ENCODE measurements at regions of chr14 and their contacts with region 1.

Region 1: GRCh38 chr14:23588884-23589598 is 10.5 kb upstream of the JPH4 start:
- DNase-seq: peak; percentile 72
- H3K4me3 ChIP-seq: no peak overlapping the region
- H3K27ac ChIP-seq: no peak overlapping the region
- H3K4me1 ChIP-seq: no peaks in the 10 kb centered on the region
- H3K27me3 ChIP-seq: no peaks in the 10 kb centered on the region
- CTCF ChIP-seq: peak; percentile 68 to 88

Region 2: GRCh38 chr14:23578560-23579310 is 10.3 kb before region 1 on chr14 and contains the start of gene JPH4:
- CTCF ChIA-PET with region 1: interaction called, 10 read pairs
- dilution Hi-C with region 1: no loop called
- in situ Hi-C with region 1: no loop called
- intact Hi-C with region 1: no loop called
- DNase-seq: no peak
- H3K4me3 ChIP-seq: no peak within 1 kb of the TSS
- H3K27ac ChIP-seq: no peak within 1 kb of the TSS
- H3K4me1 ChIP-seq: peaks cover 3% of the 10 kb centered on the region
- H3K27me3 ChIP-seq: peaks cover 32% of the 10 kb centered on the region
- CTCF ChIP-seq: no peak
- total RNA-seq, gene JPH4: 0.16 TPM in 1 of 2 donors, not detected in the other

Region 3: DNA sequence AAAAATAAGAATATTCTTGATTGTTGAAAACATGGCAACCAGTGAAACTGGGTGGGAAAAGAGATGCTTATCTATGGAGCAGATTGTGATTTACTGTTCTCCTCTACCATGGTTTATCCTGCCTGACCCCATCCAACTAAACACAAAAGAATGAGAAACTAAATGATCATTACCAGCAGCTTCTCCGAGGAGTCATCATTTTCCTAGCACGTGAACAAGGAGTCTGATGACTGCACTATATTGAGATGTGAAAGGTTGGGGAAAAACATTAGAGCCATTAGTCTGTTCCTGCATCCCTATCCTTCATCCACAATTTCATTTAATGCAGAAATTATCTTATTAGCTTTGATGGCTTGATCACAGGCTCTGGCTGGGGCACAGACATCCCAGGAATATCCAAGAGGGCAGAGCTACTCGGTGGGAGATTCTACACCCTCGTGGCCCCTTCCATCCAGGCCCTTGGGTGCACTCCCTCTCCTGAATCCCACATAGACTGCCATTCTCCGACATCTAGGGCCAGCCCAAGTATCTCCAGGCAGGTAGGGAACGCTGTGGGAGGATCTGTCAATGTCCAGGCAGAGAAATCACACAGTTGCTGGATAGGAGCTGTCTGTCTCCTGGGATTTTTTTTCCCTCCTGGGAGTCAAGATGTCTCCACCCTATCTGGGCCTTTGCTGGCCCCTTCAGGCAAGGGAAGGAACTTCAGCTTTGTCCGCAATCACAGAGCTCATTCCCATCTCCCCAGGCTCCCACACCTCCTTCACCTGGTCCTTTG is 321.2 kb after region 1 on chr14:
- CTCF ChIA-PET with region 1: interaction called, 17 read pairs
- dilution Hi-C with region 1: no loop called
- in situ Hi-C with region 1: no loop called
- intact Hi-C with region 1: loop called (anchors 1 kb)
- DNase-seq: peak; percentile 53
- H3K4me3 ChIP-seq: no peak overlapping the region
- H3K27ac ChIP-seq: no peak overlapping the region
- H3K4me1 ChIP-seq: no peaks in the 10 kb centered on the region
- H3K27me3 ChIP-seq: no peaks in the 10 kb centered on the region
- CTCF ChIP-seq: peak; percentile 90 to 92

Region 4: DNA sequence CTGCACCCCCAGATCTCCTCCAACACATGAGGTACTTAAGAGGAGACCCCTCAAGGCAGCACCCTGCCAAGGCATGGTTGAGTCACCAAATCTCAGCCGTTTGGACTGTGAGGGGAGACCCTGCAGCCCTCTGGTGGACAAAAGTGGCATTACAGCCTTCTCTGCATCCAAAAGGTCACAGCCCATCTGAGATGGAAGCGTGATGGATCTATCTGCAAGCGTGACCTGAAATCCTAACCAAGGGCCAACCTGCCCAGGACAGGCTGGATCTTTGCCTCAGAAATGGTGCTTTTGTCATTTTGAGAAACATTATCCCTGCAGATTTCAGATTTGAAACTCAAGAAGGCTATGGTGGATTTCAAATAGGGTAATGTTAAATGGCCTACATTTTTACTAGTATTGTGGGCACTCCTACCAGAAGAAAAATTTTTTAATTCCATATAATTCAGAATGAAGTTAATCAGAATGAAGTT is 340.8 kb after region 1 on chr14:
- CTCF ChIA-PET with region 1: interaction called, 8 read pairs
- dilution Hi-C with region 1: no loop called
- in situ Hi-C with region 1: no loop called
- intact Hi-C with region 1: loop called (anchors 1 kb)
- DNase-seq: peak; percentile 39
- H3K4me3 ChIP-seq: no peak overlapping the region
- H3K27ac ChIP-seq: no peak overlapping the region
- H3K4me1 ChIP-seq: peaks cover 3% of the 10 kb centered on the region
- H3K27me3 ChIP-seq: no peaks in the 10 kb centered on the region
- CTCF ChIP-seq: peak; percentile 92 to 93

Measured in mammary epithelial cell (primary cell).